ENCODE measurements at regions of chr9 and their contacts with region 1.

Region 1: GRCh38 chr9:20356403-20357035 is 265.8 kb downstream of the MLLT3 start:
- DNase-seq: peak; percentile 58 to 66 (median 62)
- H3K4me3 ChIP-seq: no peak overlapping the region
- H3K27ac ChIP-seq: no peak overlapping the region
- H3K4me1 ChIP-seq: no peaks in the 10 kb centered on the region
- H3K27me3 ChIP-seq: no peaks in the 10 kb centered on the region
- CTCF ChIP-seq: peak in 1 of 3 donors; percentile 20
- EP300 ChIP-seq: no peak
- POLR2A ChIP-seq: no peak

Region 2: DNA sequence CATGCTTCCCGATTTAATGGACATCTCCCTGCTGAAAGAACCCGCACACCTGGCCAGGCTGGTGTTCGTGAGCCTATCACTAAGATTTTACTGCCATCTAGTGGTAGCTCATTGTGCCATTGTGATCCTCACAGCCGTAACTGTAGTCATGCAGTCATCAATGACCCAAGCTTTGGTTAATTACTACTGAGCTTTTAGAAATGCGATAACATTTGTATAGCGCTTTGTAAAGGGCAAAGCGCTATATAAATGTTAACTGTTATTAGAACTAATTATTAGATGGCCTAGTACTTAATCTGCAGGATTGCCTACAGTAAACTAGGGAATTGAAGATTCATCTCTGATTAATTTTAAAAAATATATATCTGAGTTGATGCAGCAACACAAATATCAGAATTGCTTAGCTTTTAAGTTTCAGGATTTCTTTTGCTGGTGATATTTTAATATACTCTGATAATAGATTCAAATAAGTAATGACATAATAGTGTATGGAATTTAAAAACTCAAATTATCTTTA is 584.7 kb after region 1 on chr9:
- intact Hi-C with region 1: loop called in 2 of 4 experiments (anchors 5 kb)
- DNase-seq: peak; percentile 29 to 50 (median 41)
- H3K4me3 ChIP-seq: no peak overlapping the region
- H3K27ac ChIP-seq: no peak overlapping the region
- H3K4me1 ChIP-seq: no peaks in the 10 kb centered on the region
- H3K27me3 ChIP-seq: no peaks in the 10 kb centered on the region
- CTCF ChIP-seq: peak; percentile 60 to 85 (median 75)
- EP300 ChIP-seq: no peak
- POLR2A ChIP-seq: no peak